Activated CD4-positive, alpha-beta memory T cell treated with anti-CD3 and anti-CD28 coated beads for 36 hours (primary cell): ENCODE measurements at regions of chr4 and their contacts with region 1.

Region 1: GRCh38 chr4:121510341-121510874 is 129.6 kb upstream of the QRFPR start:
- DNase-seq: peak; percentile 26
- H3K4me3 Mint-ChIP-seq: no peak overlapping the region
- H3K27ac Mint-ChIP-seq: no peak overlapping the region
- H3K4me1 Mint-ChIP-seq: peaks cover 9% of the 10 kb centered on the region
- H3K27me3 Mint-ChIP-seq: peaks cover 30% of the 10 kb centered on the region

Region 2: DNA sequence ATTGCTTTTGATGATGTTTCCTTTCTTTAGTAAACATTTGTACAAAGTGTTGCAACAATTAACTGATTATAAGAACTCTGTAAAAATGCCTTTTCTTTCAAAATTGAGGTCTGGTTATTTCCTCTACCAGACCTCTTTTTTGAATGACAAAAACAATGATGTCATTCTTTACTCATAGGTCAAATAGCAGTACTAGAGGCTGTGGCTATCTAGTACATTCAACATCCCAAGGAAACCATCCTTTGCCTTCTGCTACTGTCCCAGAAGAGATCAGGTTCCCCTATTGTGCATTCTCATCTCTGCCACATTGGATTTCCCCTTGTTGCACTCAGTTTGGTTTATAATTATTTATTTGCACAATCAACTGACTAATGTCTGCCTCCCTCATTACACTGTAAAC is 1424.7 kb before region 1 on chr4:
- CTCF ChIA-PET with region 1: no interaction called
- POLR2A ChIA-PET with region 1: no interaction called
- intact Hi-C with region 1: no loop called
- DNase-seq: no peak
- H3K4me3 Mint-ChIP-seq: no peak overlapping the region
- H3K27ac Mint-ChIP-seq: no peak overlapping the region
- H3K4me1 Mint-ChIP-seq: no peaks in the 10 kb centered on the region
- H3K27me3 Mint-ChIP-seq: peaks cover 8% of the 10 kb centered on the region

Region 3: DNA sequence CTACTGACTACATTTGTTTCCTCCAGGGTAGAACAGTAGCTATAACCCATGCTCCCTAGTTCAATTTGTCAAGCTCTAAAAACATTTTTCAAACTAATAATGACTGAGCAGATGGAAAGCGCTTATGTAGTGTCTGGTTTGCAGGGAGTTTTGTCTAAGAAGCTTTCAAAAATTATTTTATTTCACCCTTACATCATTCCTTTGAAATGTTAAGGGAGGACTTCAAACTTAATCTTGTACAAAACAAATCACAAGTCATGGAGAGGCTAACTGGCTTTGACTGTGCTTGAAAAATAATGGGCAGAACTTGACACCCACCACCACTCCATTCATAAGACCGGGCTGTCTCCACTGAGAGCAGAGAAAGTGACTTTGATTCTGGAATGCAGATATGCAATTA is 23.8 kb after region 1 on chr4:
- CTCF ChIA-PET with region 1: no interaction called
- POLR2A ChIA-PET with region 1: no interaction called
- intact Hi-C with region 1: no loop called
- DNase-seq: no peak
- H3K4me3 Mint-ChIP-seq: no peak overlapping the region
- H3K27ac Mint-ChIP-seq: no peak overlapping the region
- H3K4me1 Mint-ChIP-seq: no peaks in the 10 kb centered on the region
- H3K27me3 Mint-ChIP-seq: peaks cover 7% of the 10 kb centered on the region

Region 4: DNA sequence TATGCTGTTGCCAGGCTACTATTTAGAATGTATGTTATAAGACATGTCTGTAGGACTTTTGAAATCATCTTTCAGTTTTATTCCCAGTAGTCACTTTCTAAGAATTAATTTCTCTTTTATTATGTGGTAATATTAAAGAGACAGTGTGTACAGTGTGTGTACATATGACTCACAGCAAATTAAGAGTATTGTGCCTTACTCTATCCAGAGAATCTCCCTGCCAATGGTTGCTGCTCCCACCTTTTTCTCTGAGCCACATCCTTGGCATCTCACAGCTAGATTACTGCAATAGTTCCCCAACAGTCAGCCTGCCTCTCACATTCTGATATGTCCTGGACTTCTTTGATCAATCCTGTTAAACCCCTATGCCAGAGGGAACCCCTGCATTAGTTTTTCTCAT is 71.9 kb after region 1 on chr4:
- CTCF ChIA-PET with region 1: no interaction called
- POLR2A ChIA-PET with region 1: no interaction called
- intact Hi-C with region 1: loop called (anchors 2 kb)
- DNase-seq: no peak
- H3K4me3 Mint-ChIP-seq: no peak overlapping the region
- H3K27ac Mint-ChIP-seq: no peak overlapping the region
- H3K4me1 Mint-ChIP-seq: peaks cover 5% of the 10 kb centered on the region
- H3K27me3 Mint-ChIP-seq: peaks cover 43% of the 10 kb centered on the region